ENCODE measurements at regions of chr21 and their contacts with region 1.

Region 1: DNA sequence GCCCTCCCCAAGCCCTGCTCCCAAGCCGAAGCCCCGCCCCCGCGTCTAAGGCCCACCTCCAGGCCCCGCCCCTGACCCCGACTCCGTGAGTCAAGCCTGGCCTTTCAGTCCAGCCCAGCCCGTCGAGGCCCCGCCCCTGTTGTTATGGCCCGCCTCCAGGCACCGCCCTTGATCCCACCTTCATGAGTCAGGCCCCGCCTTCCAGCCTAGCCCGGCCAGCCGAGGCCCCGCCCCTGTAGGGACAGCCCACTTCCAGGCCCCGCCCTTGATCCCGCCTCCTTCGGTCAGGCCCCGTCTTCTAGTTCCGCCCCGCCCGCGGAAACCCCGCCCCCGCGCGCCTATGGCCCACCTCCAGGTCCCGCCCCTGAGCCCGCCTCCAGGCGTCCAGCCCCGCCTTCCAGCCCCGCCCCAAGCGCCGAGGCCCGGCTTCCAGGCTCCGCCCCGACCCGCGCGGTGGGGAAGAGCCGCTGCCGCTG is 247 bp upstream of the DOP1B start:
- DNase-seq: peak; percentile 100
- ATAC-seq: peak; percentile 91
- H3K4me3 Mint-ChIP-seq: peak overlapping the region; percentile 85
- H3K27ac Mint-ChIP-seq: peak overlapping the region; percentile 77
- H3K4me1 Mint-ChIP-seq: peaks cover 32% of the 10 kb centered on the region
- H3K27me3 Mint-ChIP-seq: no peaks in the 10 kb centered on the region
- CTCF ChIP-seq: no peak

Region 2: GRCh38 chr21:36060159-36060921 is 96.0 kb before region 1 on chr21 and contains the start of gene SETD4:
- CTCF ChIA-PET with region 1: no interaction called
- POLR2A ChIA-PET with region 1: interaction called, 3 read pairs
- intact Hi-C with region 1: loop called (anchors 1 kb)
- DNase-seq: peak; percentile 96
- ATAC-seq: peak; percentile 89
- H3K4me3 Mint-ChIP-seq: peak within 1 kb of the TSS; percentile 95
- H3K27ac Mint-ChIP-seq: peak within 1 kb of the TSS; percentile 96
- H3K4me1 Mint-ChIP-seq: peaks cover 20% of the 10 kb centered on the region
- H3K27me3 Mint-ChIP-seq: no peaks in the 10 kb centered on the region
- CTCF ChIP-seq: no peak
- total RNA-seq, gene SETD4: 31.6 and 40.4 TPM in 2 replicates

Region 3: GRCh38 chr21:36141513-36141925 is 14.9 kb before region 1 on chr21:
- CTCF ChIA-PET with region 1: interaction called, 6 read pairs
- POLR2A ChIA-PET with region 1: interaction called, 15 read pairs
- intact Hi-C with region 1: loop called (anchors 1 kb)
- DNase-seq: peak; percentile 49
- ATAC-seq: peak; percentile 88
- H3K4me3 Mint-ChIP-seq: no peak overlapping the region
- H3K27ac Mint-ChIP-seq: no peak overlapping the region
- H3K4me1 Mint-ChIP-seq: peaks cover 23% of the 10 kb centered on the region
- H3K27me3 Mint-ChIP-seq: no peaks in the 10 kb centered on the region
- CTCF ChIP-seq: peak; percentile 74

Region 4: DNA sequence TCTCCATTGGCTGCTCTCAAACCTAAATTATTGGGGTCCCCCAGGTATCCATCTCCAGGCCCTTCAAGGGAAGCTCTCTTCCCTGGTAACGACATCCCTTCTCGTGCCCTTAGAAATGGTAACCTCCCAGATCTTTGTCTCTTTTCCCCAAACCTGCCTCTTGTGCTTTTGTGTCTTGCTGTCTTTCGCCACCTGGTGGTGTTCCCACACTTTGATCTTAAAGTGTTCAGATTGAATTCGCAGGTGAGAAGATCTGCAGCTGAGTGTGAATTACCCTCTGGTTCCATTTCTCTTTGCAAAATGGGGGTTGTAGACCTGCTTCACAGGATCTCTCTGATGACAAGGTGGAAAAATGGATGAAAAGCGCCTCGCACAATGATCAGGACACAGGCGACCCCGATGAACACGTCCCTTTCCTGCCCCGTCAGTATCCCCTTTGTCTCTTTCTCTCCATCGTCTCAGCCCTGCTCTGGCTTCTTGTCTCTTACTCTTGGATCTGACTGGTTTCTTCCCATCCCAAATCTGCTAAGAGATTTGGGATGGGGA is 53.3 kb after region 1 on chr21:
- CTCF ChIA-PET with region 1: interaction called, 6 read pairs
- POLR2A ChIA-PET with region 1: no interaction called
- intact Hi-C with region 1: loop called (anchors 1 kb)
- DNase-seq: no peak
- ATAC-seq: no peak
- H3K4me3 Mint-ChIP-seq: no peak overlapping the region
- H3K27ac Mint-ChIP-seq: no peak overlapping the region
- H3K4me1 Mint-ChIP-seq: peaks cover 3% of the 10 kb centered on the region
- H3K27me3 Mint-ChIP-seq: no peaks in the 10 kb centered on the region
- CTCF ChIP-seq: no peak

Region 5: DNA sequence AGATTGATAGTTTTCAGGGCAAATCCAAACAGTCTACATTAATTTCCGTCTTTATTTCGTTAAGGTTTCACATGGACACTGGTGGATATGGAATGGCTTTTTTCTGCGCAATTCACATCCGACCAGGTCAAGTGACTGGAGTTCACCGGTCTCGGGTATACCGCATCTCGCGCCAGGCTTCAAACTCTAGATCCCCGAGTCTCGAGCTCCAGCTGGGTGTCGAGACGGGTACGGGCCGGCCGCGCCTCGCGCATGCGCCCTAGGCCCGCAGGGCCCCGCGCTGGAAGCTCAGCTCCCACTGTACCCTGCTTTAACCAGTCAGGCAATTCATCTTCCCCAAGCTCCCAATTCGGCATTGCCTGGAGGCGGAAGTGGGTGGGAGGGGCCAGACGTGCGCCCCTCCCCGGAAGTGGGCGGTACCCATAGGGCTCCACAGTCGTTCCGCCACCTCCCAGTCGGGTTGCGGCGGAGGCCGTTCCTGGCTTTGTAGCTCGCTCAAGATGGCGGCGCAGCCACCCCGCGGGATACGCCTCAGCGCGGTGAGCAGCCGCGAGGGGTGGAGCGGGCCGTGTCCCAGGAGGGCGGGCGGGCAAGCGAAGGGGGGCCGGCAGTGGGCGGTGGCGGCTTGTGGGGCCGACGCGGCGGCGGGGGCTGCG is 163.5 kb after region 1 on chr21 and contains the start of gene MORC3:
- CTCF ChIA-PET with region 1: no interaction called
- POLR2A ChIA-PET with region 1: interaction called, 25 read pairs
- intact Hi-C with region 1: loop called (anchors 1 kb)
- DNase-seq: peak; percentile 98
- ATAC-seq: peak; percentile 88
- H3K4me3 Mint-ChIP-seq: peak within 1 kb of the TSS; percentile 97
- H3K27ac Mint-ChIP-seq: peak within 1 kb of the TSS; percentile 97
- H3K4me1 Mint-ChIP-seq: peaks cover 50% of the 10 kb centered on the region
- H3K27me3 Mint-ChIP-seq: no peaks in the 10 kb centered on the region
- CTCF ChIP-seq: no peak
- total RNA-seq, gene MORC3: 55.4 and 65.6 TPM in 2 replicates

Region 6: GRCh38 chr21:36989699-36990507 is 833.5 kb after region 1 on chr21:
- CTCF ChIA-PET with region 1: no interaction called
- POLR2A ChIA-PET with region 1: no interaction called
- intact Hi-C with region 1: loop called (anchors 10 kb)
- DNase-seq: peak; percentile 91
- ATAC-seq: peak; percentile 92
- H3K4me3 Mint-ChIP-seq: peak overlapping the region; percentile 83
- H3K27ac Mint-ChIP-seq: peak overlapping the region; percentile 80
- H3K4me1 Mint-ChIP-seq: peaks cover 10% of the 10 kb centered on the region
- H3K27me3 Mint-ChIP-seq: no peaks in the 10 kb centered on the region
- CTCF ChIP-seq: peak; percentile 27